Heart left ventricle (tissue), 16 donors: ENCODE measurements at regions of chr5 and their contacts with region 1.

Region 1: DNA sequence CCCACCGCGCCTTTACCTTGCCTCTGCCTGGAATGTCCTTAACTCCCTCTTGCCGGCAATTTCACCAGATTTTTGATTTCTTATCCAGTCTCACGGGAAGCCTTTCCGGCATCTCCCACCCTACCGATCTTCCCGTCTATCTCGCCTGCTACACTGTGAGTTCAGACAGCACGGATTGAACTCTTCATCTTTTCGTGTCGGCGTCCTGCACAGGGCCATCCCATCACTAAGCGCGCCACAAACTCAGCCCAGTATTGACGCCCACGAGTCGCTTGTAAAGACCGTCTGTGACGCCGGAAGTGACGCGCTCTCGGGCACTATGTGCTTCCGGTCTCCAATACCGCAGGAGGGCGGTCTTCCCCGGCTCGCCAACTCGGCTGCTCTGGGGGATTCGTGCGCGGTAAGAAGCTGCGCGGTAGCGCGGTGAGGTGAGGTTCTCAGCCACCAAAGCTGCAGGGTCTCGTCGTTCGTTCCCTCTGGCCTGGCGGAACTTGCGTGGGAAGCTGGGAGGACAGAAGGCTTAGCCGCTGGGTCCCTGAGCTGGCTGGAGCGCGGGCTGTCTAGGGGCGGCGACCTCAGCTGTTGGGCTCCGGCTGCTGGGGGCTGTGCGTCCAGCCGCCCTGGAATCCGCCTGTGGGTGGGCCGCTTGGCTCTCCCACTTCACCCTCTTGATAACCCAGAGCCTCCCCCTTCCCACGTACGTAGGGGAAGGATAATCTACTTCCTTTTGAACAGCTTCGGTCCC is at the start of gene ZCCHC9:
- DNase-seq: peak; percentile 93 to 97 (median 95)
- ATAC-seq: peak; percentile 97 to 99 (median 98)
- H3K4me3 ChIP-seq: peak within 1 kb of the TSS; percentile 73 to 95 (median 87)
- H3K27ac ChIP-seq: peak within 1 kb of the TSS; percentile 74 to 96 (median 92)
- H3K4me1 ChIP-seq: peaks cover 0 to 52% (median 34%) of the 10 kb centered on the region in 12 donors
- H3K27me3 ChIP-seq: no peaks in the 10 kb centered on the region
- CTCF ChIP-seq: peak in 10 of 12 donors; percentile 3 to 58 (median 30)
- POLR2A ChIP-seq: peak in 1 of 2 donors; percentile 76
- total RNA-seq, gene ZCCHC9: 6.5 to 16.2 (median 11.1) TPM

Region 2: DNA sequence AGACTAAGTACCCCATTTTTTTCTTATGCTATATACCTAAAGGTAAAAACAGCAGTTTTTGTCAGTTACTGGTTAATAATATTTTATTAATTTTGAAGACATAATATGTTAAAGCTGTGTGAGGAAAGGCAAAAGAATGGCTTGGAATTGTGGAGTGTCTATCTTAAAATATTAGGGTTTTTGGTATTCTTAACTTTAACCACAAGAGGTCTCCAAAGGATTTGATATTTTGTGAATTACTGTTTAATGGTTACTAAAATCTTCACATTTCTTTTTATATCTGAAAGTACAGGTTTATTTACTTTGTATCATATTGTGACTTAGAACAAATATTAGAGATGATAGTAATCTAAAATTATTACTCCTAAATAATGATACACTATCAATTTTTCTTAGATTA is 614.7 kb before region 1 on chr5:
- intact Hi-C with region 1: loop called in 4 of 10 experiments (anchors 5 to 10 kb)
- DNase-seq: no peak
- ATAC-seq: no peak
- H3K4me3 ChIP-seq: no peak overlapping the region
- H3K27ac ChIP-seq: no peak overlapping the region
- H3K4me1 ChIP-seq: no peaks in the 10 kb centered on the region
- H3K27me3 ChIP-seq: no peaks in the 10 kb centered on the region
- CTCF ChIP-seq: peak in 11 of 12 donors; percentile 17 to 53 (median 33)
- POLR2A ChIP-seq: no peak

Region 3: GRCh38 chr5:80711938-80712337 is 589.5 kb before region 1 on chr5:
- intact Hi-C with region 1: loop called in 1 of 10 experiments (anchors 10 kb)
- DNase-seq: no peak
- ATAC-seq: no peak
- H3K4me3 ChIP-seq: no peak overlapping the region
- H3K27ac ChIP-seq: no peak overlapping the region
- H3K4me1 ChIP-seq: peaks cover 0 to 8% (median 0%) of the 10 kb centered on the region in 12 donors
- H3K27me3 ChIP-seq: no peaks in the 10 kb centered on the region
- CTCF ChIP-seq: peak in 7 of 12 donors; percentile 12 to 41 (median 25)
- POLR2A ChIP-seq: no peak

Region 4: DNA sequence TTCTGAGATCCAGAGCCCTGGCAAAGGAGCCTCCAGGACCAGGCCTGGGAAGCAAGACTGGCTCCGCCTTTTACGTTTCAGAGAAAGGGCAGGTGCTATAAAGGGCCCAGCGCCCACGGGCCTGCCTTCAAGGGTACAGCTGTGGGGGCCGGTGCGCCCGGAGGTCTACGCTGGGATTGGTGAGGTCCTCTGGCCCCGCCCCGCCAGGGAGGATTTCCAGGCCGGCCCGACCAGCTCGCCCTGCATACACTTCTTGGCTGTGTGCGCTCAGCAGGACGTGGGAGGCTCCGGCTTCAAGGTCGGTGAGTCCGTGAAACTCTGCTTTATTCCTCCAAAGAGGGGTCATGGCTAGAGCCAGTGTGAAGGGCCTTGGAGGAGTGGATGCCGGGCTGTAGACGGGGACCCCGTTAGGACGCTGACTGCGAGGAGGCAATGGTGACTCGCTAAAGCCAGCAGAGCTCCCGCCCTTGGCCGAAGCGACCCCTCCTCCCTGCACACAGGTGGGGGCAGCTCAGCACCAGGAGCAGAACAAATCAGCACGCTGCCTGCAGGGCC is 68.3 kb before region 1 on chr5 and contains the start of gene CKMT2:
- intact Hi-C with region 1: loop called in 2 of 10 experiments (anchors 5 kb)
- DNase-seq: peak; percentile 88 to 95 (median 90)
- ATAC-seq: peak; percentile 79 to 88 (median 84)
- H3K4me3 ChIP-seq: peak within 1 kb of the TSS in 11 of 12 donors; percentile 21 to 72 (median 54)
- H3K27ac ChIP-seq: peak within 1 kb of the TSS; percentile 83 to 99 (median 92)
- H3K4me1 ChIP-seq: peaks cover 0 to 56% (median 26%) of the 10 kb centered on the region in 12 donors
- H3K27me3 ChIP-seq: no peaks in the 10 kb centered on the region
- CTCF ChIP-seq: no peak
- POLR2A ChIP-seq: peak; percentile 16 to 81
- total RNA-seq, gene CKMT2: 890 to 3,872 (median 1,758) TPM

Region 5: GRCh38 chr5:81265101-81265500 is 36.3 kb before region 1 on chr5:
- intact Hi-C with region 1: no loop called
- DNase-seq: no peak
- ATAC-seq: no peak
- H3K4me3 ChIP-seq: no peak overlapping the region
- H3K27ac ChIP-seq: no peak overlapping the region
- H3K4me1 ChIP-seq: peaks cover 0 to 4% (median 0%) of the 10 kb centered on the region in 12 donors
- H3K27me3 ChIP-seq: no peaks in the 10 kb centered on the region
- CTCF ChIP-seq: no peak
- POLR2A ChIP-seq: no peak

Region 6: GRCh38 chr5:81925981-81926380 is 624.5 kb after region 1 on chr5:
- intact Hi-C with region 1: no loop called
- DNase-seq: no peak
- ATAC-seq: no peak
- H3K4me3 ChIP-seq: no peak overlapping the region
- H3K27ac ChIP-seq: no peak overlapping the region
- H3K4me1 ChIP-seq: peaks cover 0 to 8% (median 0%) of the 10 kb centered on the region in 12 donors
- H3K27me3 ChIP-seq: no peaks in the 10 kb centered on the region
- CTCF ChIP-seq: no peak
- POLR2A ChIP-seq: no peak